ENCODE measurements at regions of chr20 and their contacts with region 1.

Region 1: DNA sequence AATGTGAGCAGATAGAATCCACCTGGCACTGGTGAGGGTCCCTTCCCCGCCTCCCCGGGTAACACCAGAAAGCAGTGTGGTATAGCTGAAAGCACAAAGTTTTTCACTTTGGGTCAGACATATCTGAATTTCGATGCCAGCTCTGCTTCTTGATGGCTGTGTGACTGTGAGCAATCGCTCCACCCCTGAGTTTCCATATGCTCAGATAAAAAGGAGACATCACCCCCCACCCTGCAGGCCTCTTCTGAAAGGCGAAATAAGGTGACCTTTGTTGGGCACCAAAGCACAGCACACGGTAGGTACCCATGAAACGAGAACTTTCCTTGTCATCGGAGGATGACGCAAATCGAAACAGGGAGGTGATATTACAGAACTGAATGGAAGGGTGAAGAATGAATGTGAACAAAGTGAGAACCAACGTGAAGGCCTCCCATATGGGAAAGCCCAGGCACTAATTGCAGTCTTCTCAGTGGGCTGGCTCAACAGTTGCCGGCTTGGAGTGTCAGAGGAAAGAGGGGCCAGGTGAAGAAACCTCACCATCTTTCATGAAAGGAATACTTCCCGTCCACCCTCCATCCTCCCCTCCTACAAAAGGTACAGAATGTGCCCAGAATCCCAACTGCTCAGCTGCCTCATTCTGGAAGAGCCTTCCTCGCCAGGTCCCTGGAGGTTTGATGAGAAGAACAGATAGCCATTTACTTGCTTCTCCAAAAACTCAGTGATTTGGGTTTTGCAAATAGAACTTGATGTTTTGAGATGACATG is 61.8 kb downstream of the NFATC2 start:
- DNase-seq: peak; percentile 35
- H3K4me3 Mint-ChIP-seq: peak overlapping the region; percentile 76
- H3K27ac Mint-ChIP-seq: peak overlapping the region; percentile 96
- H3K4me1 Mint-ChIP-seq: peaks cover 85% of the 10 kb centered on the region
- H3K27me3 Mint-ChIP-seq: no peaks in the 10 kb centered on the region

Region 2: DNA sequence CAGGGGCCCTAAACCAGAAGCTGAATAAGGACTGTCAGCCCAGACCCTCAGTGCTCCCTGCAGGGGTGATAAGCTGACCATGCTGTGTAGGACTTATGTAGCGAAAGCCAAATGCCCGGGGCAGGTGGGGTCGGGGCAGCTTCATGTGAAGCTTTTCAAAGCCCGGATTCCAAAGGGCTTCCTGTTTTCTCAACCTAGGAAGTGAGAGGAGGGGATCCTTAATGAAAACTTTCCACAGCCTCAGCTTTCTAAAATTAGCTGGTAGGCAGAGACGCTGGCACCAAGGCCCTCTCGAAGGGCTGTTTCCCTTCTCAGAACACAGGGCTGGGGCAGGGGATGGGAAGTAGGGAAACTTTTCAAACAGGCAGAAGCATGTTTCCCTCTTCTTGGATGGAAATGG is 87.1 kb before region 1 on chr20:
- intact Hi-C with region 1: no loop called
- DNase-seq: no peak
- H3K4me3 Mint-ChIP-seq: no peak overlapping the region
- H3K27ac Mint-ChIP-seq: no peak overlapping the region
- H3K4me1 Mint-ChIP-seq: peaks cover 37% of the 10 kb centered on the region
- H3K27me3 Mint-ChIP-seq: no peaks in the 10 kb centered on the region

Region 3: DNA sequence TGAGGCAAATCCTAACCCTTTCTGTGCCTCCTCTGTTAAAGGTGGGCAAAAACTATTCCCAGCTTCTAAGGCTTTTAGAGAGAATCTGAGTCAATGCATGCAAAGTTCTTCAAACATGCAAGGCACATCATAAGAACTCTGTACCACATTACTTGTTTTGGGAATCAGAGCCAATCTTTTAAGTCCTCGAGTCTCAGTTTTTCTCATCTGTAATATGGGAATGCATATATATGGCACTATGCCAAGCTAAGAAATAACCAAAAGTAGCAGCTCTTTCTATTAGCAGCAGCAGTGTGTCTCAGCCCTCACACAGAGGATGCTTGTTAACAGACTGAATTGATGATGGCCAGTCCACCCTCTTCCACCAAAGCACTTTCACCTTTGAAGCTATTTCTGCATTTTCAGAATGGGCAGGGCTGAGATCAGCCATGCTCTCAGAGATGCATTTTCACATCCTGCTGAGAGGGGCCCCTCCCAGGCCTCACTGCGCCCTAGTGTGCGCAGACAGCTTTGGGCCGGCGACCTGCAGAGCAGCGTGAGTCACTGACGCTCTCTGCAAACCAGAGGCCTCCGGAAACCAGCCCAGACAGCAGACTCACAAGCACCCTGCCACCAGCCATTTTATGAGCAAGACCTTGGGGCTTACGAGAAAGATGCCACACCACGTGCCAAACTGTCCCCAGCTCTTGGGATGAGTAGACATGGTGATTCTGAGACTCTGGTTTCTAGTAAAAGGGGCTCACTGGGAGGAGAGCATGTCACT is 76.2 kb before region 1 on chr20:
- intact Hi-C with region 1: loop called (anchors 1 kb)
- DNase-seq: peak; percentile 84
- H3K4me3 Mint-ChIP-seq: peak overlapping the region; percentile 28
- H3K27ac Mint-ChIP-seq: peak overlapping the region; percentile 95
- H3K4me1 Mint-ChIP-seq: peaks cover 88% of the 10 kb centered on the region
- H3K27me3 Mint-ChIP-seq: no peaks in the 10 kb centered on the region

Region 4: GRCh38 chr20:51500311-51500710 is 19.6 kb after region 1 on chr20:
- intact Hi-C with region 1: loop called (anchors 1 kb)
- DNase-seq: peak; percentile 46
- H3K4me3 Mint-ChIP-seq: no peak overlapping the region
- H3K27ac Mint-ChIP-seq: peak overlapping the region; percentile 79
- H3K4me1 Mint-ChIP-seq: peaks cover 74% of the 10 kb centered on the region
- H3K27me3 Mint-ChIP-seq: no peaks in the 10 kb centered on the region

Region 5: GRCh38 chr20:51531141-51531710 is 50.5 kb after region 1 on chr20:
- intact Hi-C with region 1: loop called (anchors 1 kb)
- DNase-seq: peak; percentile 44
- H3K4me3 Mint-ChIP-seq: peak overlapping the region; percentile 82
- H3K27ac Mint-ChIP-seq: peak overlapping the region; percentile 99
- H3K4me1 Mint-ChIP-seq: peaks cover 84% of the 10 kb centered on the region
- H3K27me3 Mint-ChIP-seq: no peaks in the 10 kb centered on the region

Region 6: GRCh38 chr20:51595058-51595532 is 114.4 kb after region 1 on chr20:
- intact Hi-C with region 1: loop called (anchors 2 kb)
- DNase-seq: peak; percentile 72
- H3K4me3 Mint-ChIP-seq: peak overlapping the region; percentile 17
- H3K27ac Mint-ChIP-seq: peak overlapping the region; percentile 65
- H3K4me1 Mint-ChIP-seq: peaks cover 46% of the 10 kb centered on the region
- H3K27me3 Mint-ChIP-seq: no peaks in the 10 kb centered on the region

Measured in activated T-helper 2 cell treated with anti-CD3 and anti-CD28 coated beads, Interferon-gamma antibody, Interleukin-2, Interleukin-4, amounts not matched to agents 10 μg/mL and 5 μg/mL and 100 μg/mL, durations not matched to agents 14 hours and 24 hours and 36 hours (primary cell).